Heart right ventricle (tissue), 16 donors: ENCODE measurements at regions of chr16 and their contacts with region 1.

Region 1: GRCh38 chr16:82626791-82627261 is at the start of gene CDH13:
- DNase-seq: peak; percentile 35 to 48
- ATAC-seq: peak; percentile 21 to 66 (median 54)
- H3K4me3 ChIP-seq: peak within 1 kb of the TSS; percentile 34 to 91 (median 79)
- H3K27ac ChIP-seq: peak within 1 kb of the TSS; percentile 75 to 97 (median 92)
- H3K4me1 ChIP-seq: peaks cover 6 to 57% (median 47%) of the 10 kb centered on the region in 9 donors
- H3K27me3 ChIP-seq: peaks cover 0 to 48% (median 0%) of the 10 kb centered on the region in 7 donors
- CTCF ChIP-seq: no peak
- total RNA-seq, gene CDH13: 126 to 221 (median 173) TPM

Region 2: DNA sequence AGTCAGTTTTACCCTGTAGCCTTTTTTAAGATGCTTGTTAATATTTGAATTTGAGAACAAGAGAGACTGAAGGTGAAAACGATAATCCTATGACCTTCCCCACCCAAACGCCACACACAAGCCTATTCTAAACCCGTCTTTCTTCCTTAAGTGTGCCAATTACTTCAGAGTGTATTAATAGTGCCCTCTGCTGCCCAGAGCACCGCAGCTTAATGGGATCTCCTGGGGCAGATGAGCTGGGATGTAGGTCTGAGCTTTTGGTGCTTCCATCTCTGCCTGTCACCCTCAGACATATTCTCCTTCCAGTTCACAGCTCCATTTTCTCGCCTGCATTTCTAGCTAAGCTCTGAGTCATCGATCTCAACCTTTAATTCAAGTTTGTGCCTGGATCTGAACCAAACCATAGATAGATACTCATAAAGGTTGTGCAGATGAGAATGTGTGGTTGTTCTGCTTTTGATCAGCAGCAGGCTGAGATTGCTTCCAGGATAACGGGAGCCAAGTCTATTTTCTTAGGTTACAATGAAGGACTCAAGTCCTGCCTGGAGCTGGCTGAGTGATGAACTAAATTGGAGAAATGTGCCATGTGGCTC is 46.4 kb before region 1 on chr16:
- intact Hi-C with region 1: no loop called
- DNase-seq: peak in 1 of 2 donors; percentile 15
- ATAC-seq: peak; percentile 47 to 81 (median 62)
- H3K4me3 ChIP-seq: no peak overlapping the region
- H3K27ac ChIP-seq: no peak overlapping the region
- H3K4me1 ChIP-seq: peaks cover 0 to 5% (median 0%) of the 10 kb centered on the region in 9 donors
- H3K27me3 ChIP-seq: no peaks in the 10 kb centered on the region
- CTCF ChIP-seq: peak in 7 of 9 donors; percentile 32 to 63 (median 49)

Region 3: DNA sequence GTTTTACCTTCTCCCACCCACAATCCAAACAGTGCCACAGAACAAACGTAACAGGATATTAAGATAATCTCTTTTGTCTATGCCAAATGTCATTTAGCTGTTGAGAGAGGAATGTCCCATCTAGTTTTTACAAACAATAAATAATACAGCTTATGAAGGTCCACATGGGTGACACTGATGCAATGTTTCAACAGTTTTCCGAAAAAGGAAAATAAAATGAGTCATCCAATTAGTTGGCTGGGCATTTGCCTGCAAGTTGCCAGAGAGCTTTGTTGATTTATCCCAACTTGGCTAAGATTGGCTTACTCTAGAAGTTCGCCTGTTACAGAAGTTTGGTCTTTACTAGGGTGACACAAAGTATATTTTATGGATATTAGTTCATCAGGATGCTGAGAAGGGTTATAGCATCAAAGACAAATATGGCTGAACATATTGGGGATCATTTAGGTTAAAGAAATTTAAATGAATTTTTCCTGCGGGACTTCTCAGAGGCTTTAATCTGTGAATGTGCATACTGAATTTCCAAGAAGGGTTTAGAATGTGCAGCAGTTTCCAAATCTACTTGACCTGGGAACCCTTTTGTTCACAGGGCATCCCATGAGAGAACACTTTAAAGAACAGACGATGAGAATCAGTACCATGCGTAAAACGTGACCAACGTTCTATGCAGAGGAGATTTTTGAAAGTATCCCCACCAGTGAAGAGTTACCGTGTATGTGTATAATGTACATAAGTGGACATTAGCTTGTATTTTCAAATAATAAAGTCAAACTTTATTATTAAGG is 73.1 kb after region 1 on chr16:
- intact Hi-C with region 1: loop called in 1 of 10 experiments (anchors 5 kb)
- DNase-seq: peak in 1 of 2 donors; percentile 53
- ATAC-seq: peak; percentile 59 to 82 (median 76)
- H3K4me3 ChIP-seq: no peak overlapping the region
- H3K27ac ChIP-seq: peak overlapping the region; percentile 54 to 93 (median 84)
- H3K4me1 ChIP-seq: peaks cover 9 to 67% (median 50%) of the 10 kb centered on the region in 9 donors
- H3K27me3 ChIP-seq: no peaks in the 10 kb centered on the region
- CTCF ChIP-seq: no peak

Region 4: GRCh38 chr16:82715833-82716232 is 89.0 kb after region 1 on chr16:
- intact Hi-C with region 1: loop called in 1 of 10 experiments (anchors 5 kb)
- DNase-seq: peak; percentile 59 to 62
- ATAC-seq: peak; percentile 80 to 96 (median 91)
- H3K4me3 ChIP-seq: peak overlapping the region in 3 of 10 donors; percentile 12 to 25 (median 24)
- H3K27ac ChIP-seq: peak overlapping the region; percentile 54 to 86 (median 76)
- H3K4me1 ChIP-seq: peaks cover 8 to 47% (median 36%) of the 10 kb centered on the region in 9 donors
- H3K27me3 ChIP-seq: no peaks in the 10 kb centered on the region
- CTCF ChIP-seq: no peak

Region 5: DNA sequence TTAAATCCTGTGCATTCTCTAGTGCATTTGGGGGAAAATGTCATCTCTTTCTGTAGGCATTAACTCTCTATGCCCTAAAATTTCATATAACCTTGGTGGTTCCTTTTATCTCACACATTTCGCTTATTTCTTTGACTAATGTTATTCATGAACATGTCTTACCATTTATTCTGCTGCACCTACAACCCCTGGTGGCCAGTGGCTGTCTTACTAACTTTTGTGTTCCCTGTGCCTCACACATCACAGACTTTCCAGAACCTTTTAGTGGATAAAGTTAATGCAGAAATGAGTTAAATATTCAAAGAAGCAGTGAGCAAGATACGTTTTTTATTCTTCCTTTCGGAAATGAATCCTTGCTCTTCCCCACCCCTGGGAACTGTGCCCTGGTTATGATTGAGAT is 111.9 kb after region 1 on chr16:
- intact Hi-C with region 1: loop called in 6 of 10 experiments (anchors 5 to 10 kb)
- DNase-seq: no peak
- ATAC-seq: no peak
- H3K4me3 ChIP-seq: no peak overlapping the region
- H3K27ac ChIP-seq: peak overlapping the region in 6 of 10 donors; percentile 53 to 88 (median 86)
- H3K4me1 ChIP-seq: peaks cover 6 to 51% (median 36%) of the 10 kb centered on the region in 9 donors
- H3K27me3 ChIP-seq: no peaks in the 10 kb centered on the region
- CTCF ChIP-seq: peak in 8 of 9 donors; percentile 10 to 61 (median 42)

Region 6: DNA sequence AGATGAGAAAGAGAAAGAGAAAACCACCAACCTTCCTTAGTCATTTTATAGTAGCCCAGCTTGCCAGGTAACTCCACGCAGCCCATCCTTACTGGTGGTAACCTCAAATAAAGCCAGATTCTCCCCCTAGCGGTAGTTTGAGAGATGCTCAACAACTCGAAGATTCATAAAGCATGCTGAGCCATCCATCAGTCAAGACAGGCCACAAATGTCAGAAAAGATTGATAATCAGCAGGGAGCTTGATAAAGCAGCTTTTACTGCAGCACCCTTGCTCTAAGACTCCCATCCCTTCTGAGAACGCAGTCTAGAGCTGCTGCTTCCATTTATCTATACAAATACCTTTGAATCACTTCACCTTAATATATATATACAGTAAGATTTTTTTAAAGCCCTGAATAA is 729.4 kb after region 1 on chr16:
- intact Hi-C with region 1: loop called in 2 of 10 experiments (anchors 10 kb)
- DNase-seq: no peak
- ATAC-seq: peak in 5 of 8 donors; percentile 51 to 72 (median 64)
- H3K4me3 ChIP-seq: no peak overlapping the region
- H3K27ac ChIP-seq: no peak overlapping the region
- H3K4me1 ChIP-seq: peaks cover 0 to 8% (median 0%) of the 10 kb centered on the region in 9 donors
- H3K27me3 ChIP-seq: no peaks in the 10 kb centered on the region
- CTCF ChIP-seq: peak; percentile 26 to 69 (median 57)

Region 7: DNA sequence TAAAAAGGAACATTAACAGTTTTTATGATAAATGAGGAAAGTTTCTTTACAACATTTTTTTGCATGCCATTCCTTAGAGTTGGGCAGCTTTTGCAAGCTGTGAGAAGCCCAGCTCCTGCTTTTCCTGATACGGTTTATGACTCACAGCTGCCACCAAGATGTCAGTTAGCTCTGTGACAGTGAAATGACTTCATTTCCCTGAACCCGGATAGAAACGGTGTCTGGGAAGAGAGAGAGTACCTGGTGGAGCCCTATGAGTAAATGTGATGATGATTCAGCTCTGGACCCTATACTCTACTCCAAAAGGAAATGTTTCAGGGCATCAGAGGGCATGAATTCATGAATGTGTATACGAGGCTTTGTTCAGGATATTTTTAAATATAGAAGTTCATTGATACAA is 814.7 kb after region 1 on chr16:
- intact Hi-C with region 1: loop called in 1 of 10 experiments (anchors 10 kb)
- DNase-seq: no peak
- ATAC-seq: peak in 3 of 8 donors; percentile 22 to 91 (median 52)
- H3K4me3 ChIP-seq: no peak overlapping the region
- H3K27ac ChIP-seq: peak overlapping the region in 1 of 10 donors; percentile 18
- H3K4me1 ChIP-seq: peaks cover 0 to 5% (median 0%) of the 10 kb centered on the region in 9 donors
- H3K27me3 ChIP-seq: no peaks in the 10 kb centered on the region
- CTCF ChIP-seq: peak in 1 of 9 donors; percentile 14